IMR-90 (cell line): ENCODE measurements at regions of chrX and their contacts with region 1.

Region 1: DNA sequence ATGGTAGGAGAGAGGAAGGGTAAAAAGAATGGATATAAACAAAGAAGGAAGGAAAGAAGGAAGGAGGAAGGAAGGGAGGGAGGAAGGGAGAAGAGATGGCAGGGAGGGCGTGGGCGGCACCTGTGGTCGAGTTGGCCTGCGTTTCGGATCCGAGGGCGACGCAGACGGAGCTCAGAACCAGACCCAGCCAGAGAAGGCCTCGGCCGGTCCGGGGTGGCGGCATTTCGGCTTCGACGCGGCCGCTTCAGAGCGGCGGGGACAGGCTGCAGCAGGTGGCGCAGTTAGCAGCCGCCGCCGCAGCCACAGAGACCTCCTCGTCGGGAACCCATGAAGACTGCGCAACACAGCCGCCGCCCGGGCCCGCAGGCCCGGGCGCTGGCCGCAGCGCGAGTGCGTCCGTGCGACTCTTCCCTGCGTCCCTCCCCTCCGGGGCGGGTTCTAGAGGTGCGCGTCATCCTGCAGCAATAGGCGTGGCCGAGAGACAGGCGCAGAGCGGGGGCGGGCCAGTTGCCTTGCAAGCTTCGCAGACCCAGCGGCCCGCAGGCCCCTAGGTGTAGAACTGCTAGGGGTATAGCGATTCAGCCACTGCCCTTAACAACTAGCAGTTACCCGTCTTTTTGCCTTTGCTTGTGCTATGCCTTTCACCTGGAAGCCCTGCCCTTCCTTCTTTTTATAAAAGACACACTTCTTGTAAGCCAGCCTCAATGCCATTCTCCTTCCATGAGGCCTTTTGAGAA is at the start of gene IDS:
- DNase-seq: peak; percentile 83
- ATAC-seq: peak; percentile 97
- H3K4me3 ChIP-seq: peak within 1 kb of the TSS; percentile 80
- H3K27ac ChIP-seq: peak within 1 kb of the TSS; percentile 72
- H3K4me1 ChIP-seq: peaks cover 3% of the 10 kb centered on the region
- H3K27me3 ChIP-seq: peaks cover 8% of the 10 kb centered on the region
- CTCF ChIP-seq: no peak
- POLR2A ChIP-seq: peak; percentile 96
- RAD21 ChIP-seq: no peak
- total RNA-seq, gene IDS: 22.8 and 26.3 TPM in 2 replicates

Region 2: DNA sequence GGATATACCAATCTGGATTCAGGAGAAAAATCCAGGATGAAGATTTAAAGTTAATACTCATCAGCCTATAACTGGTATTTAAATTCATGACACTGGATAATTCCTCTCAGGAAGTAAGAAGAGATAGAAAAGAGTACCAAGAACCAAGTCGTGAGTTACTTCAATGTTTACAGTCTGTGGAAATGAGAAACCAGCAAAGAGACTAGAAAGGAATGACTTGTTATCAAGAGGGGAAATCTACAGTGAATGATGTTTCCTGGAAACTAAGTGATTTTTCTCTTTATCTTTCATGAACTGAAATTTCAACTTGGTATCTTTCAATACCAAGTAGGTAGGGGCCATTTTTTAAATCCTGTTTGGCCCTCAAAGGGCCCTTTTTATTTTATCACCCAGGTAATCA is 1222.6 kb before region 1 on chrX:
- CTCF ChIA-PET with region 1: no interaction called
- POLR2A ChIA-PET with region 1: no interaction called
- dilution Hi-C with region 1: no loop called
- in situ Hi-C with region 1: no loop called
- intact Hi-C with region 1: no loop called
- DNase-seq: no peak
- ATAC-seq: no peak
- H3K4me3 ChIP-seq: no peak overlapping the region
- H3K27ac ChIP-seq: no peak overlapping the region
- H3K4me1 ChIP-seq: no peaks in the 10 kb centered on the region
- H3K27me3 ChIP-seq: no peaks in the 10 kb centered on the region
- CTCF ChIP-seq: no peak
- POLR2A ChIP-seq: no peak
- RAD21 ChIP-seq: no peak

Region 3: DNA sequence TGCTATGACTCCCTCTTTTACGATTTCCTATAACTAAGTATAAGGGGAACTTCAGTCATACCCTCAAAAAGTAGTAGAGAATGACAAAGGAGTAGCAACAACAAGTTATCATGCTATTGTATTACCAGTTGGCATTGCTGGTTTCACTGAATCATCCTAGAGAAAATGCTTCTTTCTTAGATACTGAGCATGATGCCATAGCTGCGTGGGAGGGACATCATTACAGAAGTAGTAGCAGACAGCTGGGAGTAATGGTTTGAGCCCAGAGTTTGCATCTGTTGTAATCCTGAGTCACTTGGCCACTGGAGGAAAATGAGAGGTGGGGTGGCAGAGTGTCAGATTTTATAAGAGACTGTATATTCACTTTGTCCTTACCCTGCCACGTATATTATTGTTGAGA is 1226.7 kb after region 1 on chrX:
- CTCF ChIA-PET with region 1: no interaction called
- POLR2A ChIA-PET with region 1: no interaction called
- dilution Hi-C with region 1: no loop called
- in situ Hi-C with region 1: loop called (anchors 25 kb)
- intact Hi-C with region 1: no loop called
- DNase-seq: peak; percentile 97
- ATAC-seq: peak; percentile 91
- H3K4me3 ChIP-seq: no peak overlapping the region
- H3K27ac ChIP-seq: no peak overlapping the region
- H3K4me1 ChIP-seq: no peaks in the 10 kb centered on the region; the same call in 1 of the 2 replicates
- H3K27me3 ChIP-seq: no peaks in the 10 kb centered on the region
- CTCF ChIP-seq: no peak
- POLR2A ChIP-seq: no peak
- RAD21 ChIP-seq: no peak